ENCODE measurements at regions of chr10 and their contacts with region 1.

Region 1: DNA sequence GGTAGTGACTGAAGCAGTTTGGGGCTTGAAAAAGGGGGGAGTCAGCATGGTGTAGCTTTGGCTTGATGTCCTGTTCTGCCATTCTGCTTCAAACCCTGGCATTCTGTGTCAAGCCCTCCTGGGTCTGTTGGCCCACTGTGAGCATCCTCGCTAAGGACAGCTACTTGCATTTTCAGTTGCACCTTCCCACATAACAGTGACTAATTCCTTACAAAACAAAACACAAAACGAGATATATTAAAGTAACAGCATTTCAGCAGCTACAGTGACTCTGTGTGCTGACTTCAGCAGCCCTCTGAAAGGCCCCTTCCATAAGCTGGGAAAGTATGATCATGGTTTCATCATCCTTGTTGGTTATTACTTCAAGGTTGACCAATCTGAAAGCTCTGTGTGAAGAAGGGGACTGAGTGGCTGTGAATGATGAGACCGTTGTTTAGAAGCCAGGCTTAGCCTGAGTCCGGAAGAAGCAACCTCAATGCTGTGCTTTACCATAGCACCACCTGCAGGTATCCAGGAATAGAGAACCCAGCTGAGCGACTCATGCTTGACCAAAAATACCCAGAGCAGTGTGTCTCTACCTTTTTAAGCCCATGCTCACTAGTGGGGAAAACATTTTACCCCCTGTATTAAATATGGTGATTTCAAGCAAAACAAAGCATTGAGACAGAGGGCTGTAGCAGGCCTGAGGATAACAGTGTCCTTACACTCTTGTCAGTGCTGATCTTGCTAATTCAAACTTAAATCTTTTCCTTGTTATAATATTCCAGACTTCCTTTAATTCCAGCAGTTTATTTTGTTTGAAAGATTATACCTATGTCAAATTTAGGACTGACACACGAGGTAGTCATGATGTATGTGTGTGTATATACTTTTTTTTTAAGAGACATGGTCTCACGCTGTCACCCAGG is 42.6 kb upstream of the CC2D2B start:
- DNase-seq: no peak

Region 2: DNA sequence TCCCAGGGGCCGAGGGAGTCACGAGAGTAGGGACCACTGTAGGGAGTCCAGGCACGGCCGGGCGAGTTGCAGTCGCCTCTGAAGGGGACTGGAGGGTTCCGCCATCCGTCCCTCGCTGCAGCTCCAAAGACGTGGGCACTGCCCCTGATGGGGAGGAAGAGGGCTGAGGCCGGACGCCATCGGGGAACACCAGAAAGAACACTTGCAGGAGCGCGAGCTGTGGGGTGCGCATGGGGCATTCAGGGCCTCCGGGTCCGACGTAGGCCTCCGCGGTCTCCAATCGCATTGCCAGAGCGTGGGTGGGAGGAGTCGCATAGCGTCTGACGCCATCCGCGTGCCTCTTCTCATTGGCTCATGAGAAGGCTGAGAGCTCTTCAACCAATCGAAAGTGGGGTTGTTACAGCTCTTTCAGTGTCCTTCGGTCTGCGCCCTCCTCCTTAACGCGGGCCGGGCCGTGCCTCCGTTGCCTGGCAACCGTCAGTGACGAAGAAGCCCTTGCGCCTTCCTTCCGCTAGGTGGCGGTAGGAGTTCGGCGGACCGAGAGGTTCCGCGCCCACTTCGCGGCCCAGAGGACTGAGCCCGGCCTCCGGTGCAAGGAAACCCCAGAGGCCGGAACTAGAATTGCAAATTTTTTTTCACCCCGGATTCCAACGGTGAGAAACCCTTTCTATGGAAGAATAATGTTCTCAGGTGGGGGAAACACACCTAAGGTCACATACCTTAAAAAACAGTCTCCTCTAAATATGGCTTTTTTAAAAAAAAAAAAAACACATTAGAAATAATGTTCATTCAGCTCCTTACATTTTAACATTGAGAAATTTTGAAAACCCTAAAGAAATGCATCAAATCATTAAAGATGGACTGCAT is 171.3 kb before region 1 on chr10 and contains the start of gene TCTN3:
- intact Hi-C with region 1: loop called in 1 of 2 experiments (anchors 10 kb)
- DNase-seq: peak; percentile 98
- total RNA-seq, gene TCTN3: 25.4 to 26.9 TPM

Region 3: DNA sequence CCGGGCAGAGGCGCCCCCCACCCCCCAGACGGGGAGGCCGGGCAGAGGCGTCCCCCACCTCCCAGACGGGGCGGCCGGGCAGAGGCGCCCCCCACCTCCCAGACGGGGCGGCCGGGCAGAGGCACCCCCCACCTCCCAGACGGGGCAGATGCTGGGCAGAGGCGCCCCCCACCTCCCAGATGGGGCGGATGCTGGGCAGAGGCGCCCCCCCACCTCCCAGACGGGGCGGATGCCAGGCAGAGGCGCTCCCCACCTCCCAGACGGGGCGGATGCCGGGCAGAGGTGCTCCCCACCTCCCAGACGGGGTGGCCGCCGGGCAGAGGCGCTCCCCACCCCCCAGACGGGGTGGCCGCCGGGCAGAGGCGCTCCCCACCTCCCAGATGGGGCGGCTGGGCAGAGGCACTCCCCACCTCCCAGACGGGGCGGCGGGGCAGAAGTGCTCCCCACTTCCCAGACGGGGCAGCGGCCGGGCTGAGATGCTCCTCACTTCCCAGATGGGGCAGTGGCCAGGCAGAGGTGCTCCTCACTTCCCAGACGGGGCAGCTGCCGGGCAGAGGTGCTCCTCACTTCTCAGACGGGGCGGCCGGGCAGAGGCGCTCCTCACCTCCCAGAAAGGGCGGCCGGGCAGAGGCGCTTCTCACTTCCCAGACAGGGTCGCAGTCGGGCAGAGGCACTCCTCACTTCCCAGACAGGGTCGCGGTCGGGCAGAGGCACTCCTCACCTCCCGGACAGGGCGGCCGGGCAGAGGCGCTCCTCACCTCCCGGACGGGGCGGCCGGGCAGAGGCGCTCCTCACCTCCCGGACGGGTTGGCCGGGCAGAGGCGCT is 55.6 kb before region 1 on chr10:
- intact Hi-C with region 1: loop called in 1 of 2 experiments (anchors 2 kb)
- DNase-seq: no peak